Dendritic cell treated with granulocyte-macrophage colony-stimulating factor and Interleukin-4, amounts not matched to agents 40 ng/mL and 50 ng/mL, for 4 days (primary cell): ENCODE measurements at regions of chr12 and their contacts with region 1.

Region 1: GRCh38 chr12:15268927-15269552 is 47.8 kb upstream of the RERG start:
- H3K4me3 Mint-ChIP-seq: no peak overlapping the region
- H3K27ac Mint-ChIP-seq: no peak overlapping the region
- H3K4me1 Mint-ChIP-seq: no peaks in the 10 kb centered on the region
- H3K27me3 Mint-ChIP-seq: peaks cover 4% of the 10 kb centered on the region

Region 2: GRCh38 chr12:14723763-14724162 is 545.3 kb before region 1 on chr12:
- intact Hi-C with region 1: loop called (anchors 2 kb)
- H3K4me3 Mint-ChIP-seq: no peak overlapping the region
- H3K27ac Mint-ChIP-seq: no peak overlapping the region
- H3K4me1 Mint-ChIP-seq: no peaks in the 10 kb centered on the region
- H3K27me3 Mint-ChIP-seq: peaks cover 1% of the 10 kb centered on the region

Region 3: DNA sequence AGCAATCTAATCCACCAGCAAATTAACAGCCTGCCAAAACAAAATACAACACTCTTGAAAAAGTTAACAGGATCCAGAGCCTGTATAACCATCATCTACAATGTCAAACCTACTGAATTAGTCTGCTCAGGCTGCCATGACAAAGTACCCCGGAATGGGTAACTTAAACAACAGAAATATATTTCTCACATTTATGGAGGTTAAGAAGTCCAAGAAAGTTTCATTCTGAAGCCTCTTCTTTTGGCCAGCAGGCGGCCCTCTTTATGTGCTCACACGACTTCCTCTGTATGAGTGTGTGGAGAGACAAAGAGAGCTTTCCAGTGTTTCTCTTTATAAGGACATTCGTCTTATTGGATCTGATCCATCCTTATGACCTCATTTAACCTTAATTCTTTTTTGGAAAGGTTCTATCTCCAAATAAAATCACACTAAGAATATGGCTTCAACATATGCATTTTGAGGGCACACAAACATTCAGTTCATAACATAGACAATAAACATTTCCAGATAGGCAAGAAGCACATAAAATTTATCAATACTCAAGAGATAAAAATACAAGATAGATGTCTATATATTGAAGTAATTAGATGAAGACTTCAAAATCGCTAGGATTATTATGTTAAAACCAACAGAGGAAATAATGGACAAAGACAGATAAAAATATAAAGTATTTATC is 41.9 kb before region 1 on chr12:
- intact Hi-C with region 1: loop called (anchors 1 kb)
- H3K4me3 Mint-ChIP-seq: no peak overlapping the region
- H3K27ac Mint-ChIP-seq: no peak overlapping the region
- H3K4me1 Mint-ChIP-seq: no peaks in the 10 kb centered on the region
- H3K27me3 Mint-ChIP-seq: peaks cover 15% of the 10 kb centered on the region

Region 4: GRCh38 chr12:15299947-15300346 is 30.9 kb after region 1 on chr12:
- intact Hi-C with region 1: no loop called
- H3K4me3 Mint-ChIP-seq: no peak overlapping the region
- H3K27ac Mint-ChIP-seq: no peak overlapping the region
- H3K4me1 Mint-ChIP-seq: no peaks in the 10 kb centered on the region
- H3K27me3 Mint-ChIP-seq: peaks cover 9% of the 10 kb centered on the region

Region 5: GRCh38 chr12:15778126-15778525 is 509.1 kb after region 1 on chr12:
- intact Hi-C with region 1: no loop called
- H3K4me3 Mint-ChIP-seq: no peak overlapping the region
- H3K27ac Mint-ChIP-seq: no peak overlapping the region
- H3K4me1 Mint-ChIP-seq: no peaks in the 10 kb centered on the region
- H3K27me3 Mint-ChIP-seq: peaks cover 4% of the 10 kb centered on the region